Endothelial cell of umbilical vein (primary cell): ENCODE measurements at regions of chr20 and their contacts with region 1.

Region 1: DNA sequence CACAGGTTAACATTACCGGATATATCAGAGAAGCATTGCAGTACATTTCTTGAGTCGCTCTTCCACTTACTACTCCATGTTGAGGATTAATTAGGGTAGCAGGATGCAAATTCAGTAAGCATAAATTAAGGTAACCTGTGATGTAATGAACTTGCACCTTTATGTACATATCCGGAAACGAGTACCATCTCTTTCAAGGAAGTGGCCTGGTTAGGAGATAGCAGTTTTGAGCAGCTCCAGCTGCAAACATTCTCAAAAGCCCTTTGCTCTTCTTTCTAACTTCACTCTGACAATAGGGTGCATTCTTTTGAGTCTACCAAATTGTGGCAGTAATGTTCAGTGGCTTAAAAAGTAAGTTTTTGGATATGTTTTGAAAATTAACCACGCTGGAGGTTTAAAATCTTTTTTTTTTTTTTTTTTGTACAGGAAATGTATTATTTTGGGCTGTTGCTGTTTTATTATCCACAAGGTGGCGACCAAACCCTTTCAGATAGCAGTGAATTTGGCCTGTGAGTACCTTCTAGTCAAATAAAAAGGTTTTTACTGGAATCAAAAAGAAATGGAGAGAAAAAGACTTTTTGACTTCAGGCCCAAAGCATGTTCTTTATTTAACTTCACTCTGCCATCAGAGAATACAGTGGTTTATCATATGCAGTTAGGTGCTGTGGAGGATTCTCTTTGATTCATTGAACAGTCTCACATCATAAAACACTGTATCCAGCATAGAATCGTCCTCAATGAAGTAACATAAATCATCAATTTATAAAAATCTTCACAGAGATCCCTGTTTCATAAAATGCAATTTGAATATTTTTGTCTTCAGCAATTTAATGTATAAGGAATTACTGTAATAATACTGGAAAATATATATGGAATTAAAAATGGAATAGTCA is 8.9 kb downstream of the FAM217B start:
- DNase-seq: peak; percentile 57
- H3K4me3 ChIP-seq: no peak overlapping the region
- H3K27ac ChIP-seq: no peak overlapping the region
- H3K4me1 ChIP-seq: no peaks in the 10 kb centered on the region
- H3K27me3 ChIP-seq: no peaks in the 10 kb centered on the region
- CTCF ChIP-seq: peak; percentile 38 to 41
- POLR2A ChIP-seq: no peak

Region 2: DNA sequence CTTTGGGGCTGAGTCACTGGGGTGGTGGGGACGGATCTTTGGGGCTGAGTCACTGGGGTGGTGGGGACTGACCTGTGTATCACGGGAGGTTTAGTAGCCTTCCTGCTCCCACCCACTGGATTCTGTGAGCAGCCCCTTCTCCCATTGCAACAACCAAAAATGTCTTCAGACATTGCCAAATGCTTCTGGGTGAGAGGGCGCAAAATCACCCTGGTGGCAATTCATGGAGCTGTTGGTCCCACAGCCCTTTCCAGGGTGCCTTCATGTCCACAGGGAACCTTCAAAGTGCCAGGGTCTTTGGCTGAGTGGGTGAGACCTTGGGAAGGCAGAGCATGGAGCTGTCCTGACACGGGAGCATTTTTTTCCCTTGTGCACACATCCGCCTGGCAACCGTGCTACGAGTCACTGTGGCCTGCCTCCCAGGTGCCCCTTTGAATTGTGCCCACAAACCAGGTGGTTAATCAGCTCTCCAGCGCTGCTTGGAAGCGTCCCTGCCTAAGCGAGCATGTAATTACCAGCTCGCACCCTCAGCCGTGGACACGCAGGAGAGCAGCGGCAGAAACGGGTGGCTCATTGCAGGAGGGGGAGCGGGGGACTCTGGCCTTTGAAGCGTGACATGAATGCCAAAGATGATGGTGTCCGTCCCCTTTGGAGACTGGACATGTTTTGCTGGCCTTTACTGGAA is 1406.5 kb before region 1 on chr20:
- CTCF ChIA-PET with region 1: no interaction called
- POLR2A ChIA-PET with region 1: no interaction called
- dilution Hi-C with region 1: no loop called
- intact Hi-C with region 1: no loop called
- DNase-seq: no peak
- H3K4me3 ChIP-seq: no peak overlapping the region
- H3K27ac ChIP-seq: no peak overlapping the region
- H3K4me1 ChIP-seq: peaks cover 10% of the 10 kb centered on the region
- H3K27me3 ChIP-seq: no peaks in the 10 kb centered on the region
- CTCF ChIP-seq: no peak
- POLR2A ChIP-seq: no peak

Region 3: DNA sequence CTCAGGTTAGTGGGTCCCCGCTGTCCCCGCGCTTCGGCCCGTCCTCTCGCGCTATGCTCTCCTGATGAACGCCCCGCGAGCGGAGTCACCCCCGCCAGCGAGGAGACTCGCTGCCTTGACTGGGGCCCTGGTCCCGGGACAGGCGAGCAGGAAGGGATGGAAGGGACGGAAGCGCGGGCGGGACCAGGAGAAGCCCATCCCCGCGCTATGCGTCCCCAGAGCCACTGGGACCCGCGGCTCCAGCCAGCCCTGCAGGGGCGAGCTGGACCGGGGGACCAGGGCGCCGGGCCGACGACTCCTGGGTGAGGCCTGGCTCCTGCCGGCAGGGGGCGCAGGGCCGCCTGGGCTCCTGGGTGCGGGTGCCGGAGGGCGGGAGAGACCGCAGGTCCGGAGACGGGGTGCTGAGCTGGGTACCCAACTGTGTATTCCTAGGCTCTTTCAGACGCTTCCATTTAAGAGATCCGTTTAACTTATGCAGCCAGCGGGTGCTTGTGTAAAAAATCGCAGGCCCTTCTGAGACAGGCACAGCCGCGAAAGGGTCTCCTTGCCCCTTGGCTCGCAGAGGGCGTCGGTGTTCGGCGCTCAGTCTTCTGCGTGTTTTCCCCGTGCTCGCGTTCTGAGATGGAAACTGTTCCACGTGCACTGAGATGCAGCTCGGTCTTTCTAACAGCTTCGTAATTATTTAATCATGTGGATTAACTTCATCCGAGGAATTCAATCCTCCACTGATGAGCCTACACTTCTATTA is 15.1 kb before region 1 on chr20:
- CTCF ChIA-PET with region 1: interaction called, 28 read pairs
- POLR2A ChIA-PET with region 1: no interaction called
- dilution Hi-C with region 1: no loop called
- intact Hi-C with region 1: no loop called
- DNase-seq: peak; percentile 56
- H3K4me3 ChIP-seq: peak overlapping the region in 2 of 3 experiments; percentile 43 to 55
- H3K27ac ChIP-seq: no peak overlapping the region
- H3K4me1 ChIP-seq: peaks cover 3% of the 10 kb centered on the region
- H3K27me3 ChIP-seq: peaks cover under 1 to 2% of the 10 kb centered on the region in 2 experiments
- CTCF ChIP-seq: peak; percentile 93 to 94
- POLR2A ChIP-seq: no peak

Region 4: GRCh38 chr20:60037120-60037499 is 88.0 kb after region 1 on chr20:
- CTCF ChIA-PET with region 1: no interaction called
- POLR2A ChIA-PET with region 1: no interaction called
- dilution Hi-C with region 1: no loop called
- intact Hi-C with region 1: no loop called
- DNase-seq: no peak
- H3K4me3 ChIP-seq: no peak overlapping the region
- H3K27ac ChIP-seq: no peak overlapping the region
- H3K4me1 ChIP-seq: no peaks in the 10 kb centered on the region
- H3K27me3 ChIP-seq: no peaks in the 10 kb centered on the region
- CTCF ChIP-seq: no peak
- POLR2A ChIP-seq: no peak

Region 5: GRCh38 chr20:61896058-61896961 is 1947.2 kb after region 1 on chr20:
- CTCF ChIA-PET with region 1: interaction called, 18 read pairs
- POLR2A ChIA-PET with region 1: no interaction called
- dilution Hi-C with region 1: no loop called
- intact Hi-C with region 1: no loop called
- DNase-seq: peak; percentile 22
- H3K4me3 ChIP-seq: no peak overlapping the region
- H3K27ac ChIP-seq: no peak overlapping the region
- H3K4me1 ChIP-seq: no peaks in the 10 kb centered on the region
- H3K27me3 ChIP-seq: no peaks in the 10 kb centered on the region
- CTCF ChIP-seq: peak; percentile 63 to 86
- POLR2A ChIP-seq: no peak